Activated CD8-positive, alpha-beta memory T cell treated with anti-CD3 and anti-CD28 coated beads, Interleukin-2, amount 10 ng/mL, durations not matched to agents 7 days and 5 days (primary cell): ENCODE measurements at regions of chr13 and their contacts with region 1.

Region 1: DNA sequence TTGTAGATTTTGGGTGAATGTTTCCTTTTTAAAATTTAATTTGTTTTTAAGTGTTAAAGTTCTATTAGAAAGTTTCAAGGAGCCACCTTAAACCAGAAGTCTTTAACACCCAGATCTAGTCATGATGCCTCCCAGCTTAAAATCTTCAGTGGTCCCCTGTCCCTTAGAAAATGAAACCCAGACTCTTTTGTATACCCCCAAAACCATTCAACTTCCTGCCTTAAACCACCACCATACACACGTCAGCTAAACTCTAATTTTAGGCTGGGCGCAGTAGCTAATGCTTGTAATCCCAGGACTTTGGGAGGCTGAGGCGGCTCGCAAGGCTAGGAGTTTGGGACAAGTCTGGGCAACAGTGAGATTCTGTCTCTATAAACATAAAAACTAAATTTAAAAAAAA is 37.9 kb downstream of the N4BP2L1 start:
- DNase-seq: peak; percentile 56
- ATAC-seq: peak; percentile 97
- H3K4me3 Mint-ChIP-seq: no peak overlapping the region
- H3K27ac Mint-ChIP-seq: peak overlapping the region; percentile 51
- H3K4me1 Mint-ChIP-seq: peaks cover 33% of the 10 kb centered on the region
- H3K27me3 Mint-ChIP-seq: no peaks in the 10 kb centered on the region

Region 2: DNA sequence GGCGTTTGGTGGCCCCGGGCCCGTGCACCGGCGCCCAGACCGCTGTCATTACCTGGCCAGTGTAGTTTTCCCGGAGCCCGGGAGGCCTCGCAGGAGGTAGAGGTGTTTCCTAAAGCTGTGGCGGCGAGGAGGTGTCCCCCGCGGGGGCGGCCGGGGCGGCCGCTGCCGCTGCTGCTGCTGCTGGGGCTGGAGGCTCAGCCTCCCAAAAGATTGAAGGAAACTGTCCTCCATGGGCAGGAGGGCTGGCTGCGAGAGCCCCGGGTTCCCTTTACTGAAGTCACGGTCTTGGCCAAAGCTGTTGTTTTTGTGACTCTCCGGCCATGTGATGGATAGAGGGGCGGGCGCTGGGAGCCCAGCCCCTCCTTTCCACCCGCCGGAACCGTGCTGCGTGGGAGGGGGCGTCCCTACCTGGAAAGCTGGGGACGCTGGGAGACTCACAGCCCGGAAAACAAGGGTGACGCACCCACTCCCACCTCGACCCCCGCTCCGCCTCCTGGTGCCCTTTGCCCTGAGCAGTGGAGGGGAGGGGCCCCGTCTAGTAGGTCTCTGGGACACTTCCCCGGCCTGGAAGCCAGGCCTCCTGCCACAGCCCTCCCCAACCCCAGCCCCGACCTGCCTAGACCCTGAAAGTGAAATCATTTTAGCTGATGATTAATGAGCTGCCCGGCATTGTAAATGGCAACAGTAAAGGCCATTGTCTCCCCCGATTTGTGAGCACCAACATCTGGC is 38.0 kb after region 1 on chr13 and contains the start of gene N4BP2L1:
- CTCF ChIA-PET with region 1: interaction called, 10 read pairs
- DNase-seq: peak; percentile 91
- ATAC-seq: peak; percentile 66
- H3K4me3 Mint-ChIP-seq: peak within 1 kb of the TSS; percentile 97
- H3K27ac Mint-ChIP-seq: peak within 1 kb of the TSS; percentile 99
- H3K4me1 Mint-ChIP-seq: peaks cover 33% of the 10 kb centered on the region
- H3K27me3 Mint-ChIP-seq: no peaks in the 10 kb centered on the region
- total RNA-seq, gene N4BP2L1: 24.8 to 29.7 TPM